ENCODE measurements at regions of chr7 and their contacts with region 1.

Region 1: DNA sequence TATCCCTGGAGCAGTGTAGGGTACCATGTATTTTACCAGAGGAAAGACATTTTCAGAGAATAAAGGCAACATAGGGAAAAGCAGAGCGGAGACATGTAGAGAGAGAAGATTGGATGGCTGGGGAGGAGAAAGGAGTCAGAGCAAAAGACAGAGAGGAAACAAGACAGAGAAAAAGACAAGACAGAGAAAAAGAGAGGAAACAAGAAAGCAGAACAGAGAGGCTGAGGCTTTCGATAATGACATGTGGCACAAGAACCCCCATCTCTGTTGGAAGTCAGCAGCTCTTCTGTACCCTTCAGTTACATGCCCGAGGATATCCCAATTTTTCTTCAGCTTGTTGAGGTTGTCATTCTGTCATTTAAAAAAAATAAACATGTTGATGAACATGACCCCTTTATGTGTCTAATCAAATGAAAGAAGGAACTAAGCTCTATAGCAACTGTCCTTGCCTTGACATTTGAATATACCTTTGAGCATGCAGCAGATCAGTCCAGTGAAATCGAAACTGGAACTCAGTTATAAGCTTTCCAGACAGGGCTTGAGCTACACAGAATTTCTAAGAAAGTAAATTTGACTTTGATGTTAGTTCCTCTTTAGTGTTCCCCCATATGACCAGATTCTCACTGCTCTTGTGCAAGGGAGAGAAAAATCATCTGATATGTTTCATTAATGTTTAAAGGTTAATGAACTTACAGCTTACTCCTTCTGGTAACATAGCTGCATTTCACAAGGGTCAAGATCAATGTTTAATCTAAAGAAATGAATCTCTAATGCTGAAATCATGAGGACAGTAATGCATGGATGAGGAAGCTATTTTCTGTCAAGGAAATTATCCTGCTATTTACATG is 75.1 kb upstream of the SP4 start:
- DNase-seq: peak; percentile 87
- ATAC-seq: peak; percentile 81
- H3K4me3 ChIP-seq: peak overlapping the region in 4 of 5 experiments; percentile 14 to 46 (median 32)
- H3K4me3 Mint-ChIP-seq: peak overlapping the region; percentile 82
- H3K27ac ChIP-seq: peak overlapping the region; percentile 79 to 90
- H3K27ac Mint-ChIP-seq: peak overlapping the region; percentile 92
- H3K4me1 ChIP-seq: peaks cover 50 to 60% of the 10 kb centered on the region in 2 donors
- H3K4me1 Mint-ChIP-seq: peaks cover 55% of the 10 kb centered on the region
- H3K27me3 ChIP-seq: no peaks in the 10 kb centered on the region
- H3K27me3 Mint-ChIP-seq: no peaks in the 10 kb centered on the region
- CTCF ChIP-seq: peak; percentile 14

Region 2: DNA sequence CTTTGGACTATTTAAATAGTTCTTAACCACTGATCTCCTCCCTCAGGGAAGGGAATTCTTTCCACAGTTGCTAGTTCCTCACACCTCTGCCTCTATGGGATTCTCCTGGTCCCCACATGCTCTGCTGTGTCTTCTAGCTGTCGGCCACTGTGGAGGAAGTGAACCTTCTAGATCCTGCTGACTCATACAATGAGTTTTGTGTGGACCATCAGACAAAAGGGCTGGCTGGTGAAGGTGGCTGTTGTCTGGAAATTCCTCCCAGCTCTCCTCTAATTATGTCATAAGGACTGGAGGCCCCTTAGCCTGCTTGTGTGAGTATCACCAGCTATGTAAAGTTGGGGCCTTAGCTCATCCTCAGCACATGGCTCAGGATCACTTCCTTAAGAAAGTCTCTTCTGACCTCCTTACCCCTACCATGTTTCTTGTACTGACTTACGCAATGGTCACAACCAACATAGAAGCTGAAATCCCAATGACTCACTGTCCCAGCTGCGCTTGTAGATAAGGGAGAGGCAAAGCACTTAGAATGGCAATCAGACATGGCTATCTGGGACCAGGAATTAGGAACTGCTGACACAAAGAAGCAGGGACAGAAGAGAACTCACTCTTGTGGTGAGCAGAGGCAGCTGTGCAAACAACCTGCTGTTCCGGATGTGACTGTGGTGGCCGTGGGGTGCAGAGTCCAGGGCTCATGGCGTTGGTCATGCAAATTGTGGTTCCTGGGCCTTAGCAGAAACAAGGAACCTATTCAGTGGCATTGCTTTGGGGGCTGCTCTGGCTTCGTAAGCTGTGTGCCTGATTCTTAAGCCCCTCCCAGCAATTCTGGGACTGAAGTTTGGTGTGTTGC is 1133.1 kb before region 1 on chr7:
- CTCF ChIA-PET with region 1: no interaction called
- POLR2A ChIA-PET with region 1: no interaction called
- intact Hi-C with region 1: loop called (anchors 5 kb)
- DNase-seq: peak; percentile 93
- ATAC-seq: peak; percentile 77
- H3K4me3 ChIP-seq: peak overlapping the region in 4 of 5 experiments; percentile 15 to 55 (median 26)
- H3K4me3 Mint-ChIP-seq: peak overlapping the region; percentile 80
- H3K27ac ChIP-seq: peak overlapping the region; percentile 88
- H3K27ac Mint-ChIP-seq: peak overlapping the region; percentile 94
- H3K4me1 ChIP-seq: peaks cover 45 to 53% of the 10 kb centered on the region in 2 donors
- H3K4me1 Mint-ChIP-seq: peaks cover 61% of the 10 kb centered on the region
- H3K27me3 ChIP-seq: no peaks in the 10 kb centered on the region
- H3K27me3 Mint-ChIP-seq: no peaks in the 10 kb centered on the region
- CTCF ChIP-seq: no peak

Region 3: DNA sequence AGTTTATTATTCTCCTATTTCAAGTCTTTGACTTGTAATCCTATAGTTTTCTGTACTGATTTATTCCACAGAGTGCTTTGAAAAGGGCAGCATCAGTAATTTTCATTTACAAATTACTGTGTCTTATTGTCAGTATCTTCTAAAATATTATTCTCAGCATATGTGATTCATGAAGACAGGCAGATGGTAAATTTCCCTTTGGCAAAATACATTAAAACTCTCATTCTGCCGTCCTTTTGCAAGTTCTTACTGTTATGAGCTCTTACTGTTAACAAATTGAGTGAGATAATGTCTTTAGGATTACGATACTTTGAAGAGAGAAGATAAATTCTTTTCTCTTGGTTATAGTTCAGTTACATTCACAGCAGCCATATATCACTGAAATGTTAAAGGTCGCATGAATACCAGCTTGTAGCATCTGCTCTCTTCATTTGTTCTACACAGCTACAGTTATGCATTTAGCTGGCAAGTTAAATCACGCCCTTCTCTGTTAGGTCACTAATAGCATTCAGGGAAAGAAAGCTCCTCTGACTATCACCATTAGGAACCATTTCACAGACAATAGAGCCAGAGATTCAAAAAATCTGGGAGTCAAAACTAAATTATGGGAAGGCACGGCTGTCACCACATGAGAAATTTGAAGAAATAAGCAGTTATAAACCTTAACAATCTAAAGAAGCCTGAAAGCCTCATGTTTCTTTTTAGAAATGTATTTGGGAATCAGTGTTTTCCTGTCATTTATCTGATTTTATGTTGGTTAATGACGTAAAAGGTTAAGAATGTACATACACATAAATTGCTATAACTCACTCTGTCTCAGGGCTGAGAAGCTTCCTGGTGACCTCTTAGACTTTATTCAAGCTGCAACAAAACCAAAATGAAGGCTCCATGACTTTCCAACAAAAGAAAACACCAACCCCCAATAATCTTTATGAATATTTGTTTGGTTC is 34.5 kb before region 1 on chr7:
- CTCF ChIA-PET with region 1: no interaction called
- POLR2A ChIA-PET with region 1: no interaction called
- intact Hi-C with region 1: loop called (anchors 5 kb)
- DNase-seq: no peak
- ATAC-seq: no peak
- H3K4me3 ChIP-seq: no peak overlapping the region
- H3K4me3 Mint-ChIP-seq: no peak overlapping the region
- H3K27ac ChIP-seq: no peak overlapping the region
- H3K27ac Mint-ChIP-seq: no peak overlapping the region
- H3K4me1 ChIP-seq: no peaks in the 10 kb centered on the region
- H3K4me1 Mint-ChIP-seq: peaks cover 4% of the 10 kb centered on the region
- H3K27me3 ChIP-seq: no peaks in the 10 kb centered on the region
- H3K27me3 Mint-ChIP-seq: no peaks in the 10 kb centered on the region
- CTCF ChIP-seq: no peak

Region 4: GRCh38 chr7:21898265-21898930 is 545.6 kb after region 1 on chr7:
- CTCF ChIA-PET with region 1: no interaction called
- POLR2A ChIA-PET with region 1: interaction called, 6 read pairs
- intact Hi-C with region 1: loop called (anchors 2 kb)
- DNase-seq: peak; percentile 78
- ATAC-seq: peak; percentile 90
- H3K4me3 ChIP-seq: peak overlapping the region; percentile 12 to 55 (median 31)
- H3K4me3 Mint-ChIP-seq: peak overlapping the region; percentile 90
- H3K27ac ChIP-seq: peak overlapping the region; percentile 78 to 96
- H3K27ac Mint-ChIP-seq: peak overlapping the region; percentile 97
- H3K4me1 ChIP-seq: peaks cover 24 to 25% of the 10 kb centered on the region in 2 donors
- H3K4me1 Mint-ChIP-seq: peaks cover 33% of the 10 kb centered on the region
- H3K27me3 ChIP-seq: no peaks in the 10 kb centered on the region
- H3K27me3 Mint-ChIP-seq: no peaks in the 10 kb centered on the region
- CTCF ChIP-seq: no peak

Region 5: GRCh38 chr7:21966271-21966670 is 613.5 kb after region 1 on chr7:
- CTCF ChIA-PET with region 1: no interaction called
- POLR2A ChIA-PET with region 1: no interaction called
- intact Hi-C with region 1: loop called (anchors 5 kb)
- DNase-seq: peak; percentile 85
- ATAC-seq: peak; percentile 96
- H3K4me3 ChIP-seq: peak overlapping the region in 1 of 5 experiments; percentile 38
- H3K4me3 Mint-ChIP-seq: peak overlapping the region; percentile 79
- H3K27ac ChIP-seq: peak overlapping the region; percentile 80 to 85
- H3K27ac Mint-ChIP-seq: peak overlapping the region; percentile 93
- H3K4me1 ChIP-seq: peaks cover 52 to 55% of the 10 kb centered on the region in 2 donors
- H3K4me1 Mint-ChIP-seq: peaks cover 58% of the 10 kb centered on the region
- H3K27me3 ChIP-seq: no peaks in the 10 kb centered on the region
- H3K27me3 Mint-ChIP-seq: no peaks in the 10 kb centered on the region
- CTCF ChIP-seq: no peak

Region 6: GRCh38 chr7:22697876-22698606 is 1345.3 kb after region 1 on chr7:
- CTCF ChIA-PET with region 1: no interaction called
- POLR2A ChIA-PET with region 1: no interaction called
- intact Hi-C with region 1: loop called (anchors 10 kb)
- DNase-seq: peak; percentile 87
- ATAC-seq: peak; percentile 70
- H3K4me3 ChIP-seq: peak overlapping the region in 1 of 5 experiments; percentile 40
- H3K4me3 Mint-ChIP-seq: peak overlapping the region; percentile 37
- H3K27ac ChIP-seq: peak overlapping the region; percentile 87 to 91
- H3K27ac Mint-ChIP-seq: peak overlapping the region; percentile 84
- H3K4me1 ChIP-seq: peaks cover 84 to 91% of the 10 kb centered on the region in 2 donors
- H3K4me1 Mint-ChIP-seq: peaks cover 86% of the 10 kb centered on the region
- H3K27me3 ChIP-seq: no peaks in the 10 kb centered on the region
- H3K27me3 Mint-ChIP-seq: no peaks in the 10 kb centered on the region
- CTCF ChIP-seq: no peak

Region 7: DNA sequence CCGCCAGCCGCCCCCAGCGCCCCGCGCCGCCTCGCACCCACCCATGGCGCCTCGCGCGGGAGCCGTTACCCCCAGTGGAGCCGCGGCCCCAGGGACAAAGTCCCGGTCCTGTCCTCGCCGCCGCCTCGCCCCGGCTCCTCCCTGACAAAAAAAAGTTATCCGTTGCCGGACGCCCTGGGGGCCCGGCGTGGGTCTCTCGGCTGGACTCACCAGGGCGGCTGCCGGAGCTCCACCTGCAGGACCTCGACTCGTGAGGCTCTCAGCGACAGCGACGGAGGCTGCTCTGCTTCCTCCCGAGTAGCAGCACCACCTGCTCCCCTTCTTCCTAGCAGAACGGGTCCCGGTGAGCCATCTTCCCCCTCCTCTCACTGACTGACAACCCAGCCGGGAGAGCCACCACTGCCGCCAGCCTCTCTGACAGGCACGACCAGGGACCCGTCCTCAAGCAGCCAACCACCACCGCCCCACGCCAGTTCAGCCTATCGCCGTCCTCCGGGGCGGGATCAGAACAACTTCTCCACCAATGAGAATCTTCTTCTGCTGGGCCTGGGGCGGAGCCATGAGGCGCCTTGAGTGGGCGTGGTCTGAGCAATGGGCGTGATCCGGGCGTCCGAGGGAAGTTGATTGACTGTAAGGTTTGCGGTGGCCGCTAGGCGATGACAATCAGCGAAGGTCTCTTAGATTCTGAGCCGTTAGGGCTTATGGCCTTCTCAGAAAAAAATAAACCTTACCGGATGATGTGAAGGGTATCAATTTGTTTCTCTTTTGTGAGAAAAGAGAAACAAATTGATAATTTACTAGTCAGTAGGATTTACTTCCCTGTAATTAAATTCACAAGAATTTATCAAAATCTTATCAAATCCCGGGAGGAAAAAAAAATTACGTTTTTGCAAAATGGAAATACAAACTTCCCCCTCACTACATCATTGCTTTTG is 1661.2 kb after region 1 on chr7 and contains the start of gene HYCC1:
- CTCF ChIA-PET with region 1: no interaction called
- POLR2A ChIA-PET with region 1: no interaction called
- intact Hi-C with region 1: loop called (anchors 10 kb)
- DNase-seq: peak; percentile 99
- ATAC-seq: peak; percentile 96
- H3K4me3 ChIP-seq: peak within 1 kb of the TSS; percentile 68 to 85 (median 80)
- H3K4me3 Mint-ChIP-seq: peak within 1 kb of the TSS; percentile 99
- H3K27ac ChIP-seq: peak within 1 kb of the TSS; percentile 63 to 70
- H3K27ac Mint-ChIP-seq: peak within 1 kb of the TSS; percentile 98
- H3K4me1 ChIP-seq: peaks cover 73 to 74% of the 10 kb centered on the region in 2 donors
- H3K4me1 Mint-ChIP-seq: peaks cover 42% of the 10 kb centered on the region
- H3K27me3 ChIP-seq: no peaks in the 10 kb centered on the region
- H3K27me3 Mint-ChIP-seq: no peaks in the 10 kb centered on the region
- CTCF ChIP-seq: peak; percentile 72
- total RNA-seq, gene HYCC1: 39.6 and 40.8 TPM in 2 replicates